ENCODE measurements at regions of chr19 and their contacts with region 1.

Region 1: GRCh38 chr19:46614114-46614722 is 10.7 kb downstream of the PTGIR start:
- DNase-seq: peak; percentile 86 to 97
- ATAC-seq: peak; percentile 80 to 92
- H3K4me3 ChIP-seq: no peak overlapping the region
- H3K27ac ChIP-seq: peak overlapping the region; percentile 18 to 52; a peak in 2 of 6 replicates
- H3K4me1 ChIP-seq: 0 out of 3 replicates have a peak, but pooled peaks cover 8% of the 10 kb centered on the region
- CTCF ChIP-seq: peak; percentile 91
- EP300 ChIP-seq: no peak
- POLR2A ChIP-seq: no peak
- RAD21 ChIP-seq: peak; percentile 79 to 84

Region 2: DNA sequence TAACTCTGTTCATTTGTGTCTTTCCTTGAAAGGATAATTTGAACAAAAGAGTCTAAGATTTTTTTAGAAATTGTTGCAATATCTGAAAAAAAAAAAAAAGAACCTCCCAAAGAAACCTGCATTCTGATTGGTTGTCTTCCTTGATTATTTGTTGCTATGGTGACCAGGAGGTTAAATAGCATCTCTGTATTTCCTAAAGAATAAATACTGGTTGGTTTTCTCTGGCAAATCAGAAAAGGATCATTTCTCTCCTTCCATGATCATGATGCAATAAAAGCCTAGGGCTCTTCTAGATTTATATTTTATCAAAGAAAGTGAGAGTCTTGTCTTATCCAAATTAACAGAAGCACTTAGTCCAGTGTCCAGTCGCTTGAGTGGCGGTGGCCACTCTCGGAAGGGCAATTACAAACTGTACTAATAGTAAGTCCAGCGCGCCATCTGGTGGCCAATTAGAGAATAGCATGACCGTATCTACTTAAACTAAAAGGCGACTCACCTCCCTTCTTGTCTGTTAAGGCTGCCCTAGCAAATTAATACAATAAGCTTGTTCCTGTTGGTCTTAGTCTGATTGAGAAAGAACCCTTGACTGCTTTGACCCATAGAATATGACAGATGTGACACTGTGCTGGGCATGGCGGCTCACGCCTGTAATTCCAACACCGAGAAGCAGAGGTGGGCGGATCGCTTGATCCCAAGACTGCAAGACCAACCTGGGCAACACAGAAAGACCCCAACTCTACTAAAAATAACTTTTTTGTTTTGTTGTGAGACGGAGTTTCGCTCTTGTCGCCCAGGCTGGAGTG is 71.6 kb before region 1 on chr19:
- CTCF ChIA-PET with region 1: interaction called, 11 read pairs
- POLR2A ChIA-PET with region 1: no interaction called
- DNase-seq: peak; percentile 69 to 94
- ATAC-seq: peak; percentile 90 to 92
- H3K4me3 ChIP-seq: no peak overlapping the region
- H3K27ac ChIP-seq: no peak overlapping the region
- H3K4me1 ChIP-seq: no peaks in the 10 kb centered on the region
- CTCF ChIP-seq: peak; percentile 98
- EP300 ChIP-seq: no peak
- POLR2A ChIP-seq: no peak
- RAD21 ChIP-seq: peak; percentile 91 to 93

Region 3: DNA sequence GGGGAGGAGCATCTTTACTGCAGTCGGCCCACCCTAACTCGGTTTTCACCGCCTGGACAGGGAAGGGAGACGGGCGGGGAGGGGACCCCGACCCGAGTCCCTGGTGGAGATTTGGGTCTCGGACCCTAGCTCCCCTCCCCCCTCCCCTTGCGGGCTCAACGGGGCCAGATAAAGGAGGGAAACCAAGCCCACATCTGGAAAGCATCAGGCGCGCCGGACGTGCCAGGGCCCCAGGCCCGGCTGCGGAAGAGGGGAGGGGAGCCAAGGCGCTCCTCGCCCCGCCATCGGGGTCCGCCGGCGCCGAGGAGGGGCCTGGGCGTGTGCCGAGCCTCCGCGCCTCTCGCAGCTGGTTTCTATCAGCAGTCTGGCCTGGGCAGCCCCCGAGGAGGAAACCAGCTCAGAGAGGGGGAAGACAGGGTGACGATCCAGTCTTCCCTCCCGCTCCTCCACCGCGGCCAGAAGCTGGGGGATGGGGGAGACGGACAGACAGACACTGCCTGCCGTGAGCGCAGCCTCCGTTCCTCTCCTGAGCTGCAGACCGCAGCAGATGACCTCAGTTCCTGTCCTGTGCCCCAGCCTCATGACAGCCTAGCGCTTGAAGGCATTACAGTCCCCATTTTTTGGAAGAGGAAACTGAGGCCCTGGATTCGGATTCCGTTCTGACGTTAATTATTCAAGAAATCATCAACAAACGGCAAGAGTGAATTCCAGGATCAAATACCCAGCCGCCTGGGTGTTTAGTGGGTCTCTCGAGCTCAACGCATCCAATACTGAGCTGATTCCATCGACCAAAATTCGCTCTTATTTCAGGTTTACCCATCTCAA is 25.4 kb after region 1 on chr19:
- CTCF ChIA-PET with region 1: interaction called, 737 read pairs
- POLR2A ChIA-PET with region 1: no interaction called
- DNase-seq: no peak
- ATAC-seq: peak; percentile 1 to 5; a peak in 3 of 6 replicates
- H3K4me3 ChIP-seq: peak overlapping the region; percentile 55
- H3K27ac ChIP-seq: peak overlapping the region in 1 of 2 experiments; percentile 71; a peak in 3 of 6 replicates
- H3K4me1 ChIP-seq: peaks cover 17% of the 10 kb centered on the region
- CTCF ChIP-seq: no peak
- EP300 ChIP-seq: no peak
- POLR2A ChIP-seq: no peak
- RAD21 ChIP-seq: no peak

Region 4: DNA sequence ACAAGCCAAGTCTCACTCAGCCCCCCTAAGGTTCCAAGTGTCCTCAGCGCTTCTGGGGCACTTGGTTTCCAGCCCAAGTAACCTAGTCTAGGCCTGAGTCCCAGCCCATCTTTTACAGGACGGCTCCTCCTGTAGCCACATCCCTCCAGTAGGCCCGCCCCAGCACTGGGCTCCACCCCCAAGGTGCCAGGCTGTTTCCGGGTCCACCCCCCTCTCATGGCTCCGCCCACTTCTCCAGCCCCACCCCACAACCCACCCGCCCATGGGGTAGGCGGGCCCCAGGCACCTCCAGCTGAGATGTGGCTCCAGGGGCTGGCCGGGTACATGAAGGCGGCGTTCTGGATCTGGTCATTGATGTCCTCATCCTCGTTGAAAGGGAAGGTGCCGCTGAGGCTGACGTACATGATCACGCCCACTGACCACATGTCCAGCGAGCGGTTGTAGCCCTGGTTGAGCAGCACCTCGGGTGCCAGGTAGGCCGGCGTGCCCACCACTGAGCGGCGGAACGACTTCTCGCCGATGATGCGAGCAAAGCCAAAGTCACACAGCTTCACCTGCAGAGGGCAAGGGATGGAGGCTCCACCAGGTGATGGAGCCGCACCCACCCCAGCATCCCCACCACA is 64.0 kb after region 1 on chr19:
- CTCF ChIA-PET with region 1: interaction called, 19 read pairs
- POLR2A ChIA-PET with region 1: no interaction called
- DNase-seq: peak; percentile 64
- ATAC-seq: peak; percentile 64 to 84
- H3K4me3 ChIP-seq: no peak overlapping the region
- H3K27ac ChIP-seq: no peak overlapping the region
- H3K4me1 ChIP-seq: no peaks in the 10 kb centered on the region
- CTCF ChIP-seq: no peak
- EP300 ChIP-seq: no peak
- POLR2A ChIP-seq: no peak
- RAD21 ChIP-seq: no peak

Measured in A549 (cell line).